ENCODE measurements at regions of chr1 and their contacts with region 1.

Region 1: DNA sequence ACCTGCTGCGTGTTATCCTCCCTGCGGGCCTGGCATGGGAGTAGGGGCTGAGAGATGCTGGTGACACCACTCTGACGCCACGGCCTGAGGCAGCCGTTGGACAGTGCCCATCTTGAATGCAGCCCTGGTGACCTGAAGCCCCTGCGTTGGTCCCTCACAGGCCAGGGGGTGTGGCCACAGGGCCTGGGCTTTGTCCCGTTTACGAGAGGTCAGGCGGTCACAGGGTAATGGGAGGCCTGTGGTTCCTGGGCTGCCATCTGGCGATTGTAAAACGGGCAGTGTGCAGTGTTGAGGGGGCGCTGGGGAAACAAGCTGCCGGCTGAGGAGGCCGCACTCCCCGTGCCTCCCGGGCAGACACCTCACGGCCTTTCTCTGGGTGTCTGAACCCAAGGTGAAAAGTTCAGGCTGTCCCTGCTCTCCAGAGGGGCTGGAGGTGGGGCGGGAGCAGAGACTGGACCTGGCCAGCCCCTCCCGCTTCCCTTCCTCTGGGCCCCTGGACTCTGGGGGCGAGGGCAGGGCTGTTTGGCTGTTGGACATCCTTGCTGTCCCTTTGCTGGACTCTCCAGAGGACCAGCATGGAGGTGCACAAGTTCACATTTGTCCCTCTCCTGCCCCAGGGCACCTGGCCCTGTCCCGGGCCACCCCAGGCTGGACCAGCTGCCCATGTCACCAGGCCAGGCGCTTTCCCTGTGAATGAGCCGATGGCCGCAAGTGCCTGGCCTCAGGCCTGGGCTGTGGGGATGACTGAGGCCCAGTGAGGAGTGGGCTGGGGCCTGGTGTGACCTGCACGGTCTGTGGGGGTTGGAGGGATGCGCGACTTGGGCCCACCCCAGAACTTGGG is 42.4 kb downstream of the SKI start:
- DNase-seq: peak; percentile 50
- ATAC-seq: peak; percentile 71
- H3K4me3 ChIP-seq: peak overlapping the region; percentile 16 to 53 (median 31); a peak in 4 of 6 replicates
- H3K27ac ChIP-seq: peak overlapping the region; percentile 59
- H3K4me1 ChIP-seq: peaks cover 52% of the 10 kb centered on the region
- H3K27me3 ChIP-seq: no peaks in the 10 kb centered on the region
- CTCF ChIP-seq: peak; percentile 65
- EP300 ChIP-seq: peak in 1 of 2 experiments; percentile 23; a peak in 1 of 4 replicates
- POLR2A ChIP-seq: no peak
- RAD21 ChIP-seq: peak; percentile 45; the same call in 1 of the 2 replicates

Region 2: DNA sequence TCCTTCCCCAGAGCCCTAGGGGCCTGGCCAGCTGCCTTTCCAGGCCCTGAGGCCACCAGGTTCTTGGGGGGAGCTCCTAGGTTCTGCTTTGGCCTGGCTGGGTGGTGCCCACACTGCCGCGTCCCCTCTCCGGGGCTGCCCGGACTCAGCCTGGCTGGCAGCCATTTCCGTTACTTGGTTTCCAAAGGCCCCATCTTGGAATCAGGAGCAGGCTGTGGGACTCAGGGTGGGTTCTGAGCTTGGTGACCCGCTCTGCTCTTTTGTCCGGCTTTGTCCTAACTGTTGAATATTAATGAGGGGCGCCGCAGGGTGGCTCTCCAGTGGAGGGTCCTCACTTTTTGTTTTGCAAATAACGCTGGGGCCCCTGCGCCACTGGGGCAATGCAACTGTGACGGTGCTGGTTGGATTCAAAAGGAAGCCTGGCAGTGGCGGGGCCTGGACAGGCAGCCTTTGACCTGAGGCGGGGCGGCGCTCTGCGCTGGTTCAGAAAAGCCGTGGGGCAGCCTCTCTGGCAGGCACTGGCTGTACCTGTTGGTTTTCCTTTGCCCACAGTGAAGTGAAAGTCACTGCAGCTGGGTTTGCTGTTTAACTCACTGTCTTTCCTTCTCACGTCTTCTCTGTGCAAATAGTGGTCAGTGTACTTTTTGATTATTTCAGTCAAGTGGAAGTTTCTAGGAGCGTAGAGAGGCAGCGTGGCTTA is 22.2 kb before region 1 on chr1:
- CTCF ChIA-PET with region 1: no interaction called
- POLR2A ChIA-PET with region 1: interaction called, 3 read pairs
- in situ Hi-C with region 1: no loop called
- intact Hi-C with region 1: loop called (anchors 1 kb)
- DNase-seq: peak; percentile 65
- ATAC-seq: peak; percentile 79
- H3K4me3 ChIP-seq: peak overlapping the region; percentile 38 to 54 (median 43); a peak in 5 of 6 replicates
- H3K27ac ChIP-seq: peak overlapping the region; percentile 72
- H3K4me1 ChIP-seq: peaks cover 73% of the 10 kb centered on the region
- H3K27me3 ChIP-seq: no peaks in the 10 kb centered on the region
- CTCF ChIP-seq: peak; percentile 57
- EP300 ChIP-seq: no peak; a peak in 1 of 4 replicates
- POLR2A ChIP-seq: no peak
- RAD21 ChIP-seq: 0 out of 2 replicates have a peak, but pooled peaks have one; percentile 23